ENCODE measurements at regions of chr19 and their contacts with region 1.

Region 1: GRCh38 chr19:2289714-2290435 is 7.9 kb upstream of the PEAK3 start:
- DNase-seq: peak in 8 of 10 donors; percentile 48 to 87 (median 64)
- ATAC-seq: peak; percentile 81 to 82
- H3K4me3 Mint-ChIP-seq: peak overlapping the region; percentile 84 to 97 (median 90)
- H3K27ac Mint-ChIP-seq: peak overlapping the region; percentile 87 to 92 (median 91)
- H3K4me1 Mint-ChIP-seq: peaks cover 21 to 47% (median 32%) of the 10 kb centered on the region in 4 donors
- H3K27me3 Mint-ChIP-seq: no peaks in the 10 kb centered on the region

Region 2: GRCh38 chr19:2253106-2254053 is 36.5 kb before region 1 on chr19:
- POLR2A ChIA-PET with region 1: interaction called, 14 read pairs
- DNase-seq: peak in 9 of 10 donors; percentile 34 to 81 (median 62)
- ATAC-seq: peak; percentile 57 to 61
- H3K4me3 Mint-ChIP-seq: peak overlapping the region; percentile 71 to 86 (median 82)
- H3K27ac Mint-ChIP-seq: peak overlapping the region in 5 of 10 donors; percentile 33 to 69 (median 60)
- H3K4me1 Mint-ChIP-seq: peaks cover 3 to 30% (median 22%) of the 10 kb centered on the region in 4 donors
- H3K27me3 Mint-ChIP-seq: peaks cover 0 to 4% (median 0%) of the 10 kb centered on the region in 5 donors

Region 3: DNA sequence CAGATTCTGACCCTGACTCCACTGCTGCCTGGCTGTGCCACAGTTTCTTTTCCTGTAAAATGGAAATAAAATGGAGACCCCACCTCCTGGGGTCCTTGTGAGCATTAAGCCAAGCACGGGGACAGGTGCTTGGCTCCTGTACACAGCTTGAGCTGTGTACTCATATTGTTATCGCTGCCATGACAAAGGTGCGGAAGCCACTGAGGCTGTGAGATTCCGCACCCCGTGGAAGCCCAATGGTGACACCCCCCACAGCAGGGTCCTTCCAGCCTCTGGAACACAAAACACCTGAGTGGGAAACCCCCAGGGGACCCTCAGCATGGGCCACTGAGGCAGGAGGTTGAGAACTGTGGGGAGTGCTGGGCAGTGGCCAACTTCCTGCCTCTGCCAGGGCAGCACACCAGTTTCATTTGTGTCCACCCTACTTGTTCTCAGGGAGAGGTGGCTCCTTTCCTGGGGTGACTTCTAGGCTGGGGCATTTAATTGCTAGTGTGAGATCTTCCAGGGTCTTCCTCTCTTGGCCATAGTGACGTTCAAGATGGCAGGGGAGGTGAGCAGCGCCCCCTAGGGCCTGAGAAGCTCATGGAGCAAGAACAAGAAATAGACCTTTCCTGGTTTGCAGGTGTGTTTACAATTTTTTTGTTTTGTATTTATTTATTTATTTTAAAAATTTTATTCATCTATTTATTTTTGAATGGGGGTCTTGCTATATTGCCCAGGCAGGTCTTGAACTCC is 28.3 kb before region 1 on chr19:
- POLR2A ChIA-PET with region 1: interaction called, 12 read pairs
- DNase-seq: peak in 3 of 10 donors; percentile 41 to 52 (median 47)
- ATAC-seq: no peak
- H3K4me3 Mint-ChIP-seq: peak overlapping the region in 1 of 10 donors; percentile 57
- H3K27ac Mint-ChIP-seq: peak overlapping the region in 6 of 10 donors; percentile 16 to 85 (median 65)
- H3K4me1 Mint-ChIP-seq: peaks cover 3 to 51% (median 23%) of the 10 kb centered on the region in 4 donors
- H3K27me3 Mint-ChIP-seq: no peaks in the 10 kb centered on the region

Region 4: DNA sequence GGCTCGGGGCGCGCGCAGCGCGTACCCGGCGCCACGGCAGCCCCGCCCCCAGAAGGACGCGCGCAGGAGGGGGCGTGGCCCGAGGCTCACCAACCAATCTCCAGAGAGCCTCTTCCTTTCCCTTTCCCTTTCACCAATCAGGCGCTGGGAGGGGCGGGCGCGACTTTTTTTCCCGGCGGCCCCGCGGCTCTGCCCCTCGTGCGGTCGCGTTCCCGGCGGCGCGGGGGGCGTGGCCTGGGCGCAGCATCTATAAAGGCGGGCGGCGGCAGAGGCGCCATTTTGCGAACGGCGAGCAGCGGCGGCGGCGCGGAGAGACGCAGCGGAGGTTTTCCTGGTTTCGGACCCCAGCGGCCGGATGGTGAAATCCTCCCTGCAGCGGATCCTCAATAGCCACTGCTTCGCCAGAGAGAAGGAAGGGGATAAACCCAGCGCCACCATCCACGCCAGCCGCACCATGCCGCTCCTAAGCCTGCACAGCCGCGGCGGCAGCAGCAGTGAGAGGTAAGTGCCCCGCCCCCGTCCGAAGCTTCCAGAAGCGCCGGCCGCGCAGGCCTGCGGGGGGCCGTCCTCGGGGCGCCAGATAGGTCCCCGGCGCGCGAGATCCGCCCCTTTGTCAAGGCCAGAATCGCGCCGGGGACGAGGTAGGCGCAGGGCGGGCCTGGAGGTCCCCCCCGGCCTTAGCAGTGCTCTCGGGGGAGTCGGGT is 20.5 kb before region 1 on chr19:
- POLR2A ChIA-PET with region 1: interaction called, 132 read pairs
- DNase-seq: peak; percentile 98 to 100 (median 99)
- ATAC-seq: peak; percentile 77 to 85
- H3K4me3 Mint-ChIP-seq: peak overlapping the region; percentile 87 to 97 (median 90)
- H3K27ac Mint-ChIP-seq: peak overlapping the region; percentile 76 to 96 (median 93)
- H3K4me1 Mint-ChIP-seq: peaks cover 15 to 55% (median 40%) of the 10 kb centered on the region in 4 donors
- H3K27me3 Mint-ChIP-seq: no peaks in the 10 kb centered on the region

Region 5: DNA sequence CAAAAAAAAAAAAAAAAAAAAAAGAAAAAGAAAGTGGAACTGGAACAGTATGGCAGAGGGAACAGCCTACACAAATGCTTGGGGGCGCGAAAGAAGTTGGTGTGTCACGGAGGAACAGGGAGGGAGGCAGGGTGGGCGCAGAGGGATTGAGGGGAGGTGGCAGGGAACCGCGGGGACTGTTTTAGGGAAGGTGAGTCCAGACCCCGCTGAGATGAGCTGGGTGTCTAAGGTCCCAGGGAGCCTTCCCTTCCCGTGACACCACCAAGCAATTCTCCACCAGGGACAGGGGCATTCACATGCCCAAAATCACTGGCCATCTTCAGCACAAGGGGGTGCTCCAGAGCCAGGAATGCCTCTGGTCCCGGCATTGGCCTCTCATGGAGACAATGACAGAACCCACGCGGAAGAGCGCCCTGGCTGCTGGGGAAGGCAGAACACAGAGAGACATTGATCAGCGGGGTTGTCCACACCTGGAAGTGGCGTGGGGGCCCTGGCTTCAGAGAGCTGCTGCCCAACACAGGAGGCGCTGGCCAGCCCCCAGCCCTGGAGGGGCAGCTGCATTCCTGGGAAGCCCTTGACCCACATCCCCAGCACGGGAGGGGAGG is 14.8 kb before region 1 on chr19:
- POLR2A ChIA-PET with region 1: interaction called, 132 read pairs
- DNase-seq: peak in 5 of 10 donors; percentile 56 to 85 (median 64)
- ATAC-seq: peak; percentile 17 to 24
- H3K4me3 Mint-ChIP-seq: peak overlapping the region in 8 of 10 donors; percentile 13 to 79 (median 32)
- H3K27ac Mint-ChIP-seq: peak overlapping the region in 9 of 10 donors; percentile 31 to 94 (median 87)
- H3K4me1 Mint-ChIP-seq: peaks cover 19 to 39% (median 37%) of the 10 kb centered on the region in 4 donors
- H3K27me3 Mint-ChIP-seq: no peaks in the 10 kb centered on the region

Region 6: GRCh38 chr19:2302319-2303210 is 12.7 kb after region 1 on chr19:
- POLR2A ChIA-PET with region 1: interaction called, 24 read pairs
- DNase-seq: no peak
- ATAC-seq: peak; percentile 77 to 81
- H3K4me3 Mint-ChIP-seq: peak overlapping the region; percentile 37 to 86 (median 77)
- H3K27ac Mint-ChIP-seq: peak overlapping the region in 5 of 10 donors; percentile 20 to 72 (median 35)
- H3K4me1 Mint-ChIP-seq: peaks cover 5 to 29% (median 11%) of the 10 kb centered on the region in 4 donors
- H3K27me3 Mint-ChIP-seq: peaks cover 7 to 41% (median 19%) of the 10 kb centered on the region in 5 donors

Region 7: DNA sequence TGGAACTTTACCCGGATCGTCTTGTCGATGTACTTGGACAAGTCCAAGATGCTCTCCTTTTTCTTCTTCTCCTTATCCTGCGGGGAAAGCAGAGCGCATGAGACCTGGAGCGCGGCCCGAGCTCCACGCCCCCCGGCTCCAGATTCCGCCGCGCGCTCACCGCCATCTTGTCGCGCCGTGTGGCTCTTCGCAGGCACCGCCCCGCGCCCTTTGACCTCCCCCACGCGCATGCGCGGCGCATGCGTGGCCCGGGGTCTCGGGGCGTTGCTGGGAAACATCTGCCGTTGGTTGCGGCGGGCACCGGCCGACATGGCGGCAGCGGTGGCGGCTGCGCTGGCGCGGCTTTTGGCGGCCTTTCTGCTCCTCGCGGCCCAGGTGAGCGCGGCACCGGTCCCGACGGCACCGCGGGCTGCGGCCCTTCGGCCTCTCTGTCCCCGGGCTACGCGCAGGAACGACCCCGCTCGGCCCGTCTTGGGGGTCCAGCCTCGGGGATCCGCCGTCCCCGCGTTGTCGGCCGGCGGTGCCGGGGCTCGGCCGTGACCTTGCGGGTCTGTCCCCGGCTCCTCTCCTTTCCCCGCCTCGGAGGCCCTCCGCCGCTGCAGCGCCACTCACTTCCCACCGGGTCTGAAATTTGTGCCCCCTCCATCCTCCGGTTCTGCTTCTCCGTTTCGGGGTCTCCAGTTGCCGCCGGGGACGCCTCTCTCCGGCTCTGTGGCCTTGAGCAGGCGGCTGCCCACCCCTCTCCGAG is 38.7 kb after region 1 on chr19 and contains the starts of genes LSM7 and SPPL2B:
- POLR2A ChIA-PET with region 1: interaction called, 27 read pairs
- DNase-seq: peak; percentile 88 to 96 (median 92)
- ATAC-seq: peak; percentile 63 to 70
- H3K4me3 Mint-ChIP-seq: peak within 1 kb of the TSS; percentile 95 to 100 (median 99)
- H3K27ac Mint-ChIP-seq: peak within 1 kb of the TSS; percentile 94 to 100 (median 99)
- H3K4me1 Mint-ChIP-seq: peaks cover 39 to 80% (median 75%) of the 10 kb centered on the region in 4 donors
- H3K27me3 Mint-ChIP-seq: no peaks in the 10 kb centered on the region
- polyA plus RNA-seq, gene LSM7: 187 to 197 (median 196) TPM
- polyA plus RNA-seq, gene SPPL2B: 10.5 to 17.3 (median 11.0) TPM